RWPE1 (cell line): ENCODE measurements at regions of chr19 and their contacts with region 1.

Region 1: DNA sequence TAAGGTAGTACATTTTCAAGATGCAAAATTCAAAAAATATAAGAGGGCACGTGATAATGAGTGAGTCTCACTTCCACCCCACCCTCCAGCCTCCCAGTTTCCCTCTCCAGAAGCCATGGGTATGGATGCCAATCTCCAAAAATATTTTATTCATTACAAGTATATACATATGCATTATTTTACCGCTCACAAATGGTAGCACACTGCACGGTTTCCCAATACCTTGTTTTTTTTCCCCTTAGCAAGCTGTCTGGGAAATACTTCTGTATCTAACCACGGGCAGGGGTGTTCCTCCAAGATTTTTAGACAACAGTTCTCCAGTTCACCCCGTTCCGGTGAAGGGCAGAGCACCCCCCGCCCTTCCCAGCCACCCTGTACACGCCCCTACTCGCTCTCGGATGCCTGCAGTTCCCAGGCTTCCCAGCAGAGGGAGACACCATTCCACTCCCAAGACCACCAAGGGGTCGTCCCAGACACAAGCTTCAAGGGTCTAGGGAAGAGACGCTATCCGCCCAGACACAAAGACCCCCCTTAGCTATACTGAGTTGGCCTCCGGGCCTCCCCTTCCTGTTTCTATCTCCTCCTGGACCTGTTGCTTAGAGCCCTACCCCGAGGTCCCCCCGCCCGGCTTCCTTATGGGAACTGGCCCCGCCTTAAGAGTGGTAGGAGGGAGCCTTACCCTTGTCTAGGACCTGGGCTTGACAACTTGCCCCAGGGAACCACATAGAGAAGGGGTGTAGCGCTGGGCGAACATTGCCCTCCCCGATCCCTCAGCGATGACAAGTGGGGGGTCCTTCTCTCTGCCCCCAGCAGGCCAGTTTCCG is 1.1 kb upstream of the FXYD3 start:
- DNase-seq: peak; percentile 65
- H3K27ac ChIP-seq: peak overlapping the region; percentile 100
- CTCF ChIP-seq: peak; percentile 97

Region 2: GRCh38 chr19:35098413-35099049 is 16.0 kb before region 1 on chr19:
- CTCF ChIA-PET with region 1: interaction called, 16 read pairs
- POLR2A ChIA-PET with region 1: no interaction called
- DNase-seq: peak; percentile 59
- H3K27ac ChIP-seq: peak overlapping the region; percentile 92
- CTCF ChIP-seq: no peak

Region 3: GRCh38 chr19:35135389-35135909 is 20.9 kb after region 1 on chr19:
- CTCF ChIA-PET with region 1: interaction called, 37 read pairs
- POLR2A ChIA-PET with region 1: no interaction called
- DNase-seq: peak; percentile 77
- H3K27ac ChIP-seq: 0 out of 2 replicates have a peak overlapping the region, but pooled peaks have one; percentile 17
- CTCF ChIP-seq: peak; percentile 88